Colonic mucosa (tissue), 4 donors: ENCODE measurements at regions of chr5 and their contacts with region 1.

Region 1: GRCh38 chr5:34898258-34898895 is 16.9 kb downstream of the RAD1 start:
- DNase-seq: peak; percentile 64
- H3K4me3 ChIP-seq: no peak overlapping the region
- H3K27ac ChIP-seq: no peak overlapping the region
- H3K4me1 ChIP-seq: no peaks in the 10 kb centered on the region
- H3K27me3 ChIP-seq: no peaks in the 10 kb centered on the region
- CTCF ChIP-seq: peak; percentile 83

Region 2: DNA sequence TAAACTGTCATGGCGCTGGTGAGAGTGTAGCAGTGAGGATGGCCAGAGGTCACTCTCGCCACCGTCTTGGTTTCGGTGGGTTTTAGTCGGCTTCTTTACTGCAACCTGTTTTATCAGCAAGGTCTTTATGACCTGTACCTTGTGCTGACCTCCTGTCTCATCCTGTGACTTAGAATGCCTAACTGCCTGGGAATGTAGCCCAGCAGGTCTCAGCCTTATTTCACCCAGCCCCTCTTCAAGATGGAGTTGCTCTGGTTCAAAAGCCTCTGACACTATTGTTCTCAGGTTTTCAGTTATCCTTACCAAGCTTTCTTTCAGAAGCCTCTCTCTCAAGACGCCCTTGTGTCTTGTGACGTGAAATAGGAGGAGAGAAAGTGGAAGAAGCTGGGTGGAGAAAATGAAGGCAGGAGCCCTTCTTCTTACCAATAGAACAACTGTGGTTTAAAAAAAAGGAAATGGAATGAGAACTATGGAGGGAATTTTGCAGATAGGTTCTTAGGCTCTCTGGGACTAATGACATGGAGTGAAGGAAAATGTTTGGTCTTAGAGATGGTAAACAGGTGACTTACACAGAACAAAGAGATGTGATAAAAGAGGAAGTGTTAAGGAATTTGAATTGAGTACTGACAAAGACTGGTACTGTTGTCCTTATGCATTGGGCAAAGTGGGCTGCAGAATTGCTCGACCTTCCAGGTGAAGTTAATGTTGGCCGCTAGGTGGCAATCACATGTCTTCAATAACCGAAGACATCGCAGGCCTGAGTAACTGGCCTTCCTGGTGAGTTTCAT is 375.6 kb before region 1 on chr5:
- intact Hi-C with region 1: loop called (anchors 2 kb)
- DNase-seq: peak; percentile 74
- H3K4me3 ChIP-seq: no peak overlapping the region
- H3K27ac ChIP-seq: no peak overlapping the region
- H3K4me1 ChIP-seq: no peaks in the 10 kb centered on the region
- H3K27me3 ChIP-seq: no peaks in the 10 kb centered on the region
- CTCF ChIP-seq: peak; percentile 46